Caco-2 (cell line): ENCODE measurements at regions of chr2 and their contacts with region 1.

Region 1: GRCh38 chr2:172102391-172103278 is at the start of gene DLX2:
- DNase-seq: peak; percentile 89 to 93
- H3K4me3 ChIP-seq: peak within 1 kb of the TSS; percentile 62
- H3K4me3 Mint-ChIP-seq: peak within 1 kb of the TSS; percentile 88
- H3K27ac Mint-ChIP-seq: peak within 1 kb of the TSS; percentile 48
- H3K4me1 ChIP-seq: peaks cover 11% of the 10 kb centered on the region
- H3K4me1 Mint-ChIP-seq: peaks cover 14% of the 10 kb centered on the region
- H3K27me3 ChIP-seq: no peaks in the 10 kb centered on the region
- H3K27me3 Mint-ChIP-seq: peaks cover 3% of the 10 kb centered on the region
- CTCF ChIP-seq: no peak
- total RNA-seq, gene DLX2: 0.79 and 0.82 TPM in 2 replicates

Region 2: DNA sequence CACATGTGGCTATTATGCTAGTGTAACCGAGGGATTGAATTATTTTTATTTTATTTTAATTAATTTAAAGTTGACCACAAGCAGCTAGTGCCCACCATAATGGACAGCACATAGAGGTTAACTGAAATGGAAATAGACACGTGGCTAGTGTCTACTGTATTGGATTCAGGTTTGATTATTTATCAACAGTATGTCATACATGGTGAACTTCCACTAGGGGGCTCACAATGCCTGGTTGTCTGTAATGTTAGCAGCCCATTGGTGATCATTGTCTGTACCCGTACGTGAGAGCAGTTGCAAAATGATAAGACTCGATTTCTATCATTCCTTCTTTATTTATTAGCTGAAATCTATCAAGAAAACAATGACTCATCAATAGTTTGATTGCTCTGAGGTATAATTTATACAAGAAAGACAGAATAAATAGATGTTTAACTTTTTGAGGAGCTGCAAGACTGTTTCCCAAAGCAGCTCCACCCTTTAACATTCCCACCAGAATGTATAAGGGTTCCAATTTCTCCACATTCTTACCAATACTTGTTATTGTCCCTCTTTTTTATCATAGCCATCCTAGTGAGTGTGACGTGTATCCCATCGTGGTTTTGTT is 503.8 kb before region 1 on chr2:
- CTCF ChIA-PET with region 1: interaction called, 3 read pairs
- POLR2A ChIA-PET with region 1: no interaction called
- intact Hi-C with region 1: loop called (anchors 1 kb)
- DNase-seq: peak; percentile 60 to 68
- H3K4me3 ChIP-seq: no peak overlapping the region
- H3K4me3 Mint-ChIP-seq: no peak overlapping the region
- H3K27ac Mint-ChIP-seq: no peak overlapping the region
- H3K4me1 ChIP-seq: no peaks in the 10 kb centered on the region
- H3K4me1 Mint-ChIP-seq: peaks cover 6% of the 10 kb centered on the region
- H3K27me3 ChIP-seq: no peaks in the 10 kb centered on the region
- H3K27me3 Mint-ChIP-seq: peaks cover 10% of the 10 kb centered on the region
- CTCF ChIP-seq: peak; percentile 80 to 85

Region 3: DNA sequence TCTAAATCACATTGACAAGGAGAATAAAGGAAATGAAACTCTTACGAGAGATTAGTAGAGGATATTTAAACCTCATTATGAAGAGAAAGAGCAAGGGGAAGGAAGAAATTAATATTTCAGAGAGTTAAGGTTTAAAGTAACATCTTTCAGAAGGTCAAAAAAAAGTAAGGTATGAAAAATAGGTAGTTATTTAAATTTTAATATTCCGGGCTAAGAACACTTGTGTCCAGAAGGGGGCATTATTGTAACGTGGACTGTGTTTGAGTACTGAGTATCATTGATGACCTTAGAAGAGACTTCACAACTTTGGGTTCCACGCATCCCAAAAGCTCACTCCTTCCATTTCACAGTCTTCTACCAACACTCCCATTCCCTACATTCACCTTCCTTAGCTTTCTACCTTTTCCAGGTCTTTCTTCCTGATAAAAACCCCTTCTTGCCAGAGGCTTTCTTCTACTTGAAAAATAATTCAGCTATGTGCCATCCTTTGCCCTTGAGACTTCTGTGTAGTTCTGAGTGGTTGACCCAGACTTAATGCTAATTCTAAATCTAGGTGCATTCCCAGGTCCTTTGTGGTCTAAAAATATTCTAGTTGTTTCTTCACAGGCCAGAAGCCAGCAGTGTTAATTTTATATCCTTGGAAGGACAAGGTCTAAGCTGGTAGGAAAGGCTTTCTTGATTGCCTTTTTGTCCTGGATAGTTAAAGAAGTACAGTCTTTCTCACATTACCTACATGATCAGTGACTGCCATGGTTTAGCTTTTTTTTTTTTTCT is 398.9 kb before region 1 on chr2:
- CTCF ChIA-PET with region 1: interaction called, 5 read pairs
- POLR2A ChIA-PET with region 1: no interaction called
- intact Hi-C with region 1: loop called (anchors 1 kb)
- DNase-seq: peak in 1 of 2 experiments; percentile 26
- H3K4me3 ChIP-seq: no peak overlapping the region
- H3K4me3 Mint-ChIP-seq: no peak overlapping the region
- H3K27ac Mint-ChIP-seq: no peak overlapping the region
- H3K4me1 ChIP-seq: no peaks in the 10 kb centered on the region; the same call in 1 of the 2 replicates
- H3K4me1 Mint-ChIP-seq: no peaks in the 10 kb centered on the region
- H3K27me3 ChIP-seq: no peaks in the 10 kb centered on the region
- H3K27me3 Mint-ChIP-seq: no peaks in the 10 kb centered on the region
- CTCF ChIP-seq: peak; percentile 38 to 46

Region 4: GRCh38 chr2:171893824-171894611 is 208.6 kb before region 1 on chr2 and contains the start of gene SLC25A12:
- CTCF ChIA-PET with region 1: no interaction called
- POLR2A ChIA-PET with region 1: no interaction called
- intact Hi-C with region 1: loop called (anchors 5 kb)
- DNase-seq: peak; percentile 74 to 86
- H3K4me3 ChIP-seq: peak within 1 kb of the TSS; percentile 60
- H3K4me3 Mint-ChIP-seq: peak within 1 kb of the TSS; percentile 86
- H3K27ac Mint-ChIP-seq: no peak within 1 kb of the TSS
- H3K4me1 ChIP-seq: peaks cover 8% of the 10 kb centered on the region
- H3K4me1 Mint-ChIP-seq: peaks cover 14% of the 10 kb centered on the region
- H3K27me3 ChIP-seq: no peaks in the 10 kb centered on the region
- H3K27me3 Mint-ChIP-seq: peaks cover 6% of the 10 kb centered on the region
- CTCF ChIP-seq: no peak
- total RNA-seq, gene SLC25A12: 5.0 and 5.3 TPM in 2 replicates

Region 5: GRCh38 chr2:171999604-172000469 is 102.8 kb before region 1 on chr2 and contains the start of gene METAP1D:
- CTCF ChIA-PET with region 1: no interaction called
- POLR2A ChIA-PET with region 1: no interaction called
- intact Hi-C with region 1: loop called (anchors 2 kb)
- DNase-seq: peak; percentile 94 to 98
- H3K4me3 ChIP-seq: peak within 1 kb of the TSS; percentile 55
- H3K4me3 Mint-ChIP-seq: peak within 1 kb of the TSS; percentile 99
- H3K27ac Mint-ChIP-seq: peak within 1 kb of the TSS; percentile 99
- H3K4me1 ChIP-seq: peaks cover 5% of the 10 kb centered on the region; the same call in 1 of the 2 replicates
- H3K4me1 Mint-ChIP-seq: peaks cover 10% of the 10 kb centered on the region
- H3K27me3 ChIP-seq: no peaks in the 10 kb centered on the region
- H3K27me3 Mint-ChIP-seq: no peaks in the 10 kb centered on the region
- CTCF ChIP-seq: no peak
- total RNA-seq, gene METAP1D: 8.5 and 10.4 TPM in 2 replicates

Region 6: DNA sequence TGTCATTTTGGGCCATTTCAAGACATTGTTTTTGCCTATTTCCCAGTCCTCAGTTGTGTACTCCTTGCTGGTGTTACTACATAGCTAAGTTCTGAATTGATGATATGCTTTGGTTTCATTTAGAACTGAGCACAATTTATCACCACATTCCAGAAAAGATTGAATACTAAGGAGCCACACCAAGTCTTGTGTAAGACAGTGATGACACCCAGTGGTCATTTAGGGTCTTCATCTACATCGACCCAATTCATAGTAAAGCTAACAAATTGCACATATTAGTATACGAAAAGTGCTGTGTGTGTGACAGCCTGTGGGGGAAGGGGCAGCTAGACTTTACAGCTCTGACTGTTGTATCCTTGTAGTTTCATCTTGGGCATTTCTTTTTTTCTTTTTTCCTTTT is 11.0 kb after region 1 on chr2:
- CTCF ChIA-PET with region 1: interaction called, 10 read pairs
- POLR2A ChIA-PET with region 1: no interaction called
- intact Hi-C with region 1: no loop called
- DNase-seq: no peak
- H3K4me3 ChIP-seq: no peak overlapping the region
- H3K4me3 Mint-ChIP-seq: no peak overlapping the region
- H3K27ac Mint-ChIP-seq: no peak overlapping the region
- H3K4me1 ChIP-seq: peaks cover 10% of the 10 kb centered on the region
- H3K4me1 Mint-ChIP-seq: peaks cover 9% of the 10 kb centered on the region
- H3K27me3 ChIP-seq: no peaks in the 10 kb centered on the region
- H3K27me3 Mint-ChIP-seq: no peaks in the 10 kb centered on the region
- CTCF ChIP-seq: peak; percentile 20 to 30

Region 7: GRCh38 chr2:172153156-172153555 is 50.5 kb after region 1 on chr2:
- CTCF ChIA-PET with region 1: no interaction called
- POLR2A ChIA-PET with region 1: no interaction called
- intact Hi-C with region 1: no loop called
- DNase-seq: no peak
- H3K4me3 ChIP-seq: no peak overlapping the region
- H3K4me3 Mint-ChIP-seq: no peak overlapping the region
- H3K27ac Mint-ChIP-seq: no peak overlapping the region
- H3K4me1 ChIP-seq: no peaks in the 10 kb centered on the region
- H3K4me1 Mint-ChIP-seq: no peaks in the 10 kb centered on the region
- H3K27me3 ChIP-seq: no peaks in the 10 kb centered on the region
- H3K27me3 Mint-ChIP-seq: peaks cover 14% of the 10 kb centered on the region
- CTCF ChIP-seq: no peak

Region 8: DNA sequence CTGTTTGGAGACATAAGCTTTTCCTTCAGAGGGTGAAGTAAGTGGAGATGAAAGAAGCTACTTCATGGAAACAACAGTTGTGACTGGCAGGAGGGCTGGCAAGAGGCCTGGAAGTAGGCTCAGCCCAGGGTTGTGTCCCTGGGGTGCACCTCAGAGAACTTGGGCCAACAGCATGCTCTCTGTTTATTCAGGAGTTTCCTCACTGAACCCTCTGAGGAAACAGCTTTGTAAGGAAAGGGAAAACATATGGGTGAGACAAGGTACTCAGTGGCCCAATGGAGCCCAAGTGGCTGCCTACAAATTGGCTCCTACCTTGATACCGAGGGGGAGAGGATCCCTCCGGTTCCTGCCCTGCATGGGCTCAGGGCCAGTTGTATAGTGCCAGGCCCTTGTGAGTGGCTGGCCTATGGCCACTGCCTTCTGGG is 209.3 kb after region 1 on chr2:
- CTCF ChIA-PET with region 1: no interaction called
- POLR2A ChIA-PET with region 1: no interaction called
- intact Hi-C with region 1: no loop called
- DNase-seq: no peak
- H3K4me3 ChIP-seq: no peak overlapping the region
- H3K4me3 Mint-ChIP-seq: no peak overlapping the region
- H3K27ac Mint-ChIP-seq: no peak overlapping the region
- H3K4me1 ChIP-seq: no peaks in the 10 kb centered on the region
- H3K4me1 Mint-ChIP-seq: no peaks in the 10 kb centered on the region
- H3K27me3 ChIP-seq: no peaks in the 10 kb centered on the region
- H3K27me3 Mint-ChIP-seq: no peaks in the 10 kb centered on the region
- CTCF ChIP-seq: no peak